Activated T-helper 2 cell treated with anti-CD3 and anti-CD28 coated beads, Interferon-gamma antibody, Interleukin-2, Interleukin-4, amounts not matched to agents 10 μg/mL and 5 μg/mL and 100 μg/mL, durations not matched to agents 14 hours and 24 hours and 36 hours (primary cell): ENCODE measurements at regions of chr2 and their contacts with region 1.

Region 1: GRCh38 chr2:38907743-38908562 is 18.3 kb downstream of the ARHGEF33 start:
- DNase-seq: no peak
- H3K4me3 Mint-ChIP-seq: no peak overlapping the region
- H3K27ac Mint-ChIP-seq: peak overlapping the region; percentile 47
- H3K4me1 Mint-ChIP-seq: peaks cover 15% of the 10 kb centered on the region
- H3K27me3 Mint-ChIP-seq: peaks cover 6% of the 10 kb centered on the region

Region 2: DNA sequence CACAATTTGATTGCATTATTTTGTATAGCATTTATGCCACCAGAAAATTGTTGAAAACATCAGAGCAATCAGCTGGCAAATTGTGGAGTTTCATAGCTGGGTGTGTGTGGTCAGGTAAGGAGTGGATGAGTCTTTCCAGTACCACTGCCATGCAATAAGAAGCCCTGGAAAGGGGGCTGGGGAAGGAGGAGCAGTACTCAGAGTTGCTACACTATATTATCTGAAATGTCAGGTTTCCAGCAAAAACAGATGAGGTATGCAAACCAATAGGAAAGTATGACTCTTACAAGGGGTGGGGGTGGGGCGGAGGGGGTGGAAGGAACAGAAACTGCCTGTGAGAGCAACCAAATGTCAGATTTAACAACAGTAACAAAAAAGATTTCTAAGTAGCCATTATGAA is 100.7 kb after region 1 on chr2:
- intact Hi-C with region 1: loop called (anchors 1 kb)
- DNase-seq: no peak
- H3K4me3 Mint-ChIP-seq: peak overlapping the region; percentile 64
- H3K27ac Mint-ChIP-seq: peak overlapping the region; percentile 97
- H3K4me1 Mint-ChIP-seq: peaks cover 17% of the 10 kb centered on the region
- H3K27me3 Mint-ChIP-seq: no peaks in the 10 kb centered on the region